Adrenal gland (tissue), 19 donors: ENCODE measurements at regions of chr14 and their contacts with region 1.

Region 1: DNA sequence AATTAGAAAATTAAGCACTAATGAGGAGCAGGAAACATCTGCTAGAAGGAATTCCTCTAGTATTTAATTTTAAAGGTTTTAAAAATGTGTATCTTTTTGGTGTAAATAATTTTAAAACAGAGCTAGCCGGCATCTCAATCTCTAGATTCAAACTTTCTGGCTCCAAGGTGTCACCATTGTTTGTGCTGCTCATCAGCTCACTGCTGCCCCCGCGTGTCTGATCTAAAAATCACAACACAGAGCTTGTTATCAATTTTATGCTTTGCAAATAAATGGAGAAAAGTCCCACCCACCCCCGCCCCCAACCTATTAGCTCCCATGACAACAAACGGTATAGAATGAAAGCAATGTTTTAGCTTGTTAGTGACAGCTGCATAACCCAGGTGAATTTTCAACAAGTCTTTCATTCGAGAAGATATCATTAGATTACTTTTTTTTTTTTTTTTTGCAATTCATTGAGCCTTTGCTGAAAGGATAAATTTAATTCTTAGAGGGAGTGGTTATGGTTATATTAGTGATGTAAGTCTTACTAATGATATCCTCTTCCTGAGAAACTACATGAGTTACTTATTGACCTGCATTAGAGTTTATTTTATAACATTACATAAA is 11.3 kb upstream of the ABHD12B start:
- DNase-seq: peak; percentile 74 to 95 (median 84)
- H3K4me3 ChIP-seq: peak overlapping the region in 3 of 4 donors; percentile 51 to 68 (median 66)
- H3K27ac ChIP-seq: peak overlapping the region in 3 of 5 donors; percentile 53 to 73 (median 67)
- H3K4me1 ChIP-seq: peaks cover 0 to 6% of the 10 kb centered on the region in 2 donors
- H3K27me3 ChIP-seq: no peaks in the 10 kb centered on the region
- CTCF ChIP-seq: peak; percentile 49 to 83 (median 62)
- POLR2A ChIP-seq: no peak

Region 2: GRCh38 chr14:50578433-50578832 is 282.1 kb before region 1 on chr14:
- intact Hi-C with region 1: no loop called
- DNase-seq: no peak
- H3K4me3 ChIP-seq: no peak overlapping the region
- H3K27ac ChIP-seq: no peak overlapping the region
- H3K4me1 ChIP-seq: peaks cover 0 to 10% of the 10 kb centered on the region in 2 donors
- H3K27me3 ChIP-seq: no peaks in the 10 kb centered on the region
- CTCF ChIP-seq: no peak
- POLR2A ChIP-seq: no peak

Region 3: GRCh38 chr14:50599700-50600444 is 260.7 kb before region 1 on chr14:
- intact Hi-C with region 1: loop called in 1 of 2 experiments (anchors 10 kb)
- DNase-seq: no peak
- H3K4me3 ChIP-seq: no peak overlapping the region
- H3K27ac ChIP-seq: no peak overlapping the region
- H3K4me1 ChIP-seq: no peaks in the 10 kb centered on the region
- H3K27me3 ChIP-seq: no peaks in the 10 kb centered on the region
- CTCF ChIP-seq: peak; percentile 20 to 67 (median 58)
- POLR2A ChIP-seq: no peak

Region 4: GRCh38 chr14:50784683-50785456 is 75.7 kb before region 1 on chr14:
- intact Hi-C with region 1: loop called in 1 of 2 experiments (anchors 5 kb)
- DNase-seq: no peak
- H3K4me3 ChIP-seq: no peak overlapping the region
- H3K27ac ChIP-seq: no peak overlapping the region
- H3K4me1 ChIP-seq: peaks cover 0 to 7% of the 10 kb centered on the region in 2 donors
- H3K27me3 ChIP-seq: no peaks in the 10 kb centered on the region
- CTCF ChIP-seq: no peak
- POLR2A ChIP-seq: no peak

Region 5: DNA sequence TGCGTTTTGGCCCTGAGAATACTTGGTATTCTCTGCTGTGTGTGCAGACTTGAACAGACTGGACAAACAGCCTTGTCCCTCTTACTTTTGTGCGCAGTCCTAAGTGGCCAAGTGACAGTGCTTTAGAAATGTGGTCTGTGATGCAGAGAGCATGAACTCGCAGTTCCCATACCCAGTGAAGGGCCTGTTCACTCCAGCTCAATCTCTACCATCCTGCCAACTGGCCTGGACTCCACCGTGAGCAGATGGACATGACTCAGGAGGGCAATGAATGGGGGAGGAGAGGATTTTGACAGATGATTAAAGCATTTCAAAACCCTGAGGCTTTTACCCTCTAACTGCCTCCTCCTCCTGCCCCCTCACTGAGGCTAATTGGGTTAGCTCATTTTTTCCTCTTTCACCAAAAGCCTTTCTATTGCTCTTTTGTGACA is 146.2 kb after region 1 on chr14:
- intact Hi-C with region 1: no loop called
- DNase-seq: peak; percentile 28 to 73 (median 46)
- H3K4me3 ChIP-seq: no peak overlapping the region
- H3K27ac ChIP-seq: peak overlapping the region in 2 of 5 donors; percentile 27 to 31
- H3K4me1 ChIP-seq: peaks cover 0 to 28% of the 10 kb centered on the region in 2 donors
- H3K27me3 ChIP-seq: no peaks in the 10 kb centered on the region
- CTCF ChIP-seq: no peak
- POLR2A ChIP-seq: no peak